MCF 10A (cell line): ENCODE measurements at regions of chr6 and their contacts with region 1.

Region 1: DNA sequence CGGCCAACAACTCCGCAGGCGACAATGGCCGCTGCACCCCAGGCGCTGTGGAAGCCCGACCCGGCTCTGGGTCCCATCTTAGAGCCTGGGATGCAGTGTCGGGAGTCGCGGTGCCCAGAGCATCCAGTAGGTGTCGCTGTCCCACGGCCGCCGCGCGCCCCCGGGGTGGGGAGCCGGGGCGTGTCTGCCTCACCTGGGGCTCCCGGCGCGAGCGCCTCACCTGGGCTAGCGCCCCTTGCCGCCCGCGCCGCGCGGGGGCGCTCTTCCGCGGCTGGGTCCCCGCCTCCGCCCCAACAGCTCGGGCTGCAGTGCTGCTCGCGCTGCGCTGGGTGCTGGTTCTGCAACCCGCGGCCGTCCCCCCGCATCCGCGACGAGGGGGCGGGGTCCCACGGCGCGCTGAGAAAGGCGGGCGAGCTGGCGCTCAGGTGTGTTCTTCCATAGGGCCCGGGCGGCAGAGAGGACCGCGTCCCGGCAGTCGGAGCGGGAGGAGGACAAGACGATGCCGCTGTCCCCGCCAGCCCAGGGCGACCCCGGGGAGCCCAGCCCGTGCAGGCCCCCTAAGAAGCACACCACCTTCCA is at the start of gene CRYBG1:
- DNase-seq: peak; percentile 82
- H3K4me3 Mint-ChIP-seq: peak within 1 kb of the TSS; percentile 74
- H3K27ac Mint-ChIP-seq: no peak within 1 kb of the TSS
- H3K4me1 Mint-ChIP-seq: no peaks in the 10 kb centered on the region
- H3K27me3 Mint-ChIP-seq: no peaks in the 10 kb centered on the region
- CTCF ChIP-seq: peak; percentile 93
- total RNA-seq, gene CRYBG1: 36.5 and 45.3 TPM in 2 replicates

Region 2: GRCh38 chr6:106125925-106126435 is 234.5 kb before region 1 on chr6:
- CTCF ChIA-PET with region 1: no interaction called
- POLR2A ChIA-PET with region 1: no interaction called
- intact Hi-C with region 1: no loop called
- DNase-seq: no peak
- H3K4me3 Mint-ChIP-seq: no peak overlapping the region
- H3K27ac Mint-ChIP-seq: no peak overlapping the region
- H3K4me1 Mint-ChIP-seq: peaks cover 14% of the 10 kb centered on the region
- H3K27me3 Mint-ChIP-seq: no peaks in the 10 kb centered on the region
- CTCF ChIP-seq: no peak

Region 3: GRCh38 chr6:106173124-106173879 is 187.2 kb before region 1 on chr6:
- CTCF ChIA-PET with region 1: no interaction called
- POLR2A ChIA-PET with region 1: no interaction called
- intact Hi-C with region 1: no loop called
- DNase-seq: no peak
- H3K4me3 Mint-ChIP-seq: no peak overlapping the region
- H3K27ac Mint-ChIP-seq: no peak overlapping the region
- H3K4me1 Mint-ChIP-seq: no peaks in the 10 kb centered on the region
- H3K27me3 Mint-ChIP-seq: no peaks in the 10 kb centered on the region
- CTCF ChIP-seq: no peak

Region 4: GRCh38 chr6:106339334-106340029 is 21.0 kb before region 1 on chr6:
- CTCF ChIA-PET with region 1: interaction called, 18 read pairs
- POLR2A ChIA-PET with region 1: interaction called, 4 read pairs
- intact Hi-C with region 1: no loop called
- DNase-seq: peak; percentile 87
- H3K4me3 Mint-ChIP-seq: peak overlapping the region; percentile 61
- H3K27ac Mint-ChIP-seq: peak overlapping the region; percentile 43
- H3K4me1 Mint-ChIP-seq: peaks cover 11% of the 10 kb centered on the region
- H3K27me3 Mint-ChIP-seq: no peaks in the 10 kb centered on the region
- CTCF ChIP-seq: peak; percentile 68

Region 5: DNA sequence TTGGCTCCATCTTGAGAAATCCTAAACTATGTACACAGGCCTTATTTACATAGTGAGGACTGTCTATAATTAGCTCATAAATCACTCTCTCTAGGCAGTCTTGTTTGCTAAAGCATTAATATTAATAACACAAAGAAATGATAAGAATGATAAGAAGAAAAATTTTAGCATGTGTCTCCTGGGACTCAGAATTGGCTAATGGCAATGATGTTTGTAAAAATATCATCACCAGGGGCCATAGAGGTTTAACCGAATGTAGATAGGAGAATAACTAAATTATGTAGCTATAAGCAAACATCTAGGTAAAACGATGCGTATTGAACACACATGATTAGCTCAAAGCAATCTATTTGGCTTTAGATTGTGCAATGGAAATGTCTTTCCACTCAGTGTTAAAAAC is 13.2 kb before region 1 on chr6:
- CTCF ChIA-PET with region 1: interaction called, 21 read pairs
- POLR2A ChIA-PET with region 1: no interaction called
- intact Hi-C with region 1: no loop called
- DNase-seq: no peak
- H3K4me3 Mint-ChIP-seq: no peak overlapping the region
- H3K27ac Mint-ChIP-seq: no peak overlapping the region
- H3K4me1 Mint-ChIP-seq: no peaks in the 10 kb centered on the region
- H3K27me3 Mint-ChIP-seq: no peaks in the 10 kb centered on the region
- CTCF ChIP-seq: no peak

Region 6: DNA sequence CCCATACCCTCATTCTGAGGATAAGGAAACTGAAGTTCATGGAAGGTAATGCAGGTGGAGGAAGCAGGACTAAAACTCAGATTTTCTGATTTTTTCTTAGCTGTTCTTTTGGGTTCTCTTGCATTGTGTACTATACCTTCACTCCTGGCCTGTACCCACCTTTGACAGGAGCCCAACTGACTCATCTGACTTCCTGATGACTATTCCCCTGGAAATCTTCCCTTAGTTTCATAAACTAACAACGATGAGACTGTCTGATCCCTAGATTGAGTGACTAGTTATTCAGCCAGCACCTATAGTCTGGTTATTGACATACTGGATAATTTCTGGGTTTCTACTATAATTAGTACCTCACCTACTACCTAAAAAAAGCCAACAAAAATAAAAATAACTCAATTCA is 10.1 kb after region 1 on chr6:
- CTCF ChIA-PET with region 1: interaction called, 31 read pairs
- POLR2A ChIA-PET with region 1: interaction called, 15 read pairs
- intact Hi-C with region 1: no loop called
- DNase-seq: peak; percentile 78
- H3K4me3 Mint-ChIP-seq: no peak overlapping the region
- H3K27ac Mint-ChIP-seq: peak overlapping the region; percentile 59
- H3K4me1 Mint-ChIP-seq: peaks cover 15% of the 10 kb centered on the region
- H3K27me3 Mint-ChIP-seq: no peaks in the 10 kb centered on the region
- CTCF ChIP-seq: no peak

Region 7: GRCh38 chr6:106377061-106377540 is 16.6 kb after region 1 on chr6:
- CTCF ChIA-PET with region 1: interaction called, 31 read pairs
- POLR2A ChIA-PET with region 1: interaction called, 4 read pairs
- intact Hi-C with region 1: no loop called
- DNase-seq: peak; percentile 32
- H3K4me3 Mint-ChIP-seq: no peak overlapping the region
- H3K27ac Mint-ChIP-seq: no peak overlapping the region
- H3K4me1 Mint-ChIP-seq: peaks cover 34% of the 10 kb centered on the region
- H3K27me3 Mint-ChIP-seq: no peaks in the 10 kb centered on the region
- CTCF ChIP-seq: no peak

Region 8: DNA sequence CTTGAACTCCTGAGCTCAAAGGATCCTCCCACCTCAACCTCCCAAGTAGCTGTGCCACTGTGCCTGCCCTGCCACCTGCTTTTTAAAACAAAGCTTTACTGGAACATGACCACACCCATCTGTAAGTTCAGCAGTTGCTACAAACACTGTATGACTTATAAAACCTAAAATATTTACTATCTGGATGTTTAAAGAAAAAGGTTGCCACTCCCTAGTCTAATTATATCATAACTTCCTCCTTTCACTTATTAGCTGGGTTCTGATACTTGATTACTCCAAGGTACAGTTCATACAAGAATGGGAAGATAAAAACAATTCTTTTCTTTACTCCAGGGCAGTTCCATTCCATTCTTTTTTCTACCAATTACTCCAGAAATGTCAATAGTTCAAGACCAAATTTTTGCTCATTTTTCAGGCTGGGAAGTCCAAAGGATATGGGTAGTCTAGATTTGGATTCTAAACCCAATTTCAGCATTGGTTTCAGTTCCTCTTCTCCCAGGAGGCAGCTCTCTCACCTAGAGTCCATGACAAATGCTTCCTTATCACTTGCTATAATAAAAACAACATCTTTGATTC is 1534.4 kb after region 1 on chr6:
- CTCF ChIA-PET with region 1: no interaction called
- POLR2A ChIA-PET with region 1: no interaction called
- intact Hi-C with region 1: no loop called
- DNase-seq: no peak
- H3K4me3 Mint-ChIP-seq: no peak overlapping the region
- H3K27ac Mint-ChIP-seq: peak overlapping the region; percentile 10
- H3K4me1 Mint-ChIP-seq: peaks cover 9% of the 10 kb centered on the region
- H3K27me3 Mint-ChIP-seq: no peaks in the 10 kb centered on the region
- CTCF ChIP-seq: no peak